Activated naive CD4-positive, alpha-beta T cell treated with anti-CD3 and anti-CD28 coated beads for 36 hours (primary cell): ENCODE measurements at regions of chr16 and their contacts with region 1.

Region 1: GRCh38 chr16:75764154-75764768 is 38.0 kb upstream of the CPHXL start:
- DNase-seq: peak; percentile 77
- H3K4me3 Mint-ChIP-seq: no peak overlapping the region
- H3K27ac Mint-ChIP-seq: no peak overlapping the region
- H3K4me1 Mint-ChIP-seq: peaks cover 12% of the 10 kb centered on the region
- H3K27me3 Mint-ChIP-seq: peaks cover 3% of the 10 kb centered on the region

Region 2: GRCh38 chr16:75198135-75198600 is 566.1 kb before region 1 on chr16:
- CTCF ChIA-PET with region 1: interaction called, 11 read pairs
- intact Hi-C with region 1: loop called (anchors 1 kb)
- DNase-seq: no peak
- H3K4me3 Mint-ChIP-seq: no peak overlapping the region
- H3K27ac Mint-ChIP-seq: no peak overlapping the region
- H3K4me1 Mint-ChIP-seq: peaks cover 9% of the 10 kb centered on the region
- H3K27me3 Mint-ChIP-seq: peaks cover 13% of the 10 kb centered on the region

Region 3: DNA sequence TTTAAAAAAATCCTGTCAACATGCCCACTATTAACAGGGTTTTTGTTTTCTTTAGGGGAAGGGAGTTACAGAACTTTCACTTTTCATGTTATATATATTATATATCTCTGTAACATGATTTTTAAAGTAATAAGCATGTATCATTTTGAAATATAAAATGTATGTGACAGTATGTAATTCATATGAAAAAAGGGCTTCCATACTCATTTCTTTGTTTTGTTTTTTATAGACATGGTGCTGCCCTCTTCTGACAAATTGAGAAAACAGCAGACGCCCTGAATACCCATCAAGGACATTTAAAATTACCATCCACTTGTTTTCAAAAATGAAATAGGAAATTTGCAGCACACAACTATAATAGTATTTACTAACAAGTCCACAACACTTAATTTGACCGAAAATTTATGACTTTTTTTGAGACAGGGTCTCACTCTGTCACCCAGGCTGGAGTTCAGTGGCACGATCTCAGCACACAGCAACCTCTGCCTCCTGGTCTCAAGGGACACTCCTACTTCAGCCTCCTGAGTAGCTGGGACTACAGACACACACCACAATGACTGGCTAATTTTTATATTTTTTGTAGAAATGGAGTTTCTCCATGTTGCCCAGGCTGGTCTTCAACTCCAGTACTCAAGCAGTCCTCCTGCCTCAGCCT is 361.3 kb before region 1 on chr16:
- CTCF ChIA-PET with region 1: no interaction called
- intact Hi-C with region 1: loop called (anchors 1 kb)
- DNase-seq: no peak
- H3K4me3 Mint-ChIP-seq: no peak overlapping the region
- H3K27ac Mint-ChIP-seq: no peak overlapping the region
- H3K4me1 Mint-ChIP-seq: peaks cover 27% of the 10 kb centered on the region
- H3K27me3 Mint-ChIP-seq: no peaks in the 10 kb centered on the region

Region 4: DNA sequence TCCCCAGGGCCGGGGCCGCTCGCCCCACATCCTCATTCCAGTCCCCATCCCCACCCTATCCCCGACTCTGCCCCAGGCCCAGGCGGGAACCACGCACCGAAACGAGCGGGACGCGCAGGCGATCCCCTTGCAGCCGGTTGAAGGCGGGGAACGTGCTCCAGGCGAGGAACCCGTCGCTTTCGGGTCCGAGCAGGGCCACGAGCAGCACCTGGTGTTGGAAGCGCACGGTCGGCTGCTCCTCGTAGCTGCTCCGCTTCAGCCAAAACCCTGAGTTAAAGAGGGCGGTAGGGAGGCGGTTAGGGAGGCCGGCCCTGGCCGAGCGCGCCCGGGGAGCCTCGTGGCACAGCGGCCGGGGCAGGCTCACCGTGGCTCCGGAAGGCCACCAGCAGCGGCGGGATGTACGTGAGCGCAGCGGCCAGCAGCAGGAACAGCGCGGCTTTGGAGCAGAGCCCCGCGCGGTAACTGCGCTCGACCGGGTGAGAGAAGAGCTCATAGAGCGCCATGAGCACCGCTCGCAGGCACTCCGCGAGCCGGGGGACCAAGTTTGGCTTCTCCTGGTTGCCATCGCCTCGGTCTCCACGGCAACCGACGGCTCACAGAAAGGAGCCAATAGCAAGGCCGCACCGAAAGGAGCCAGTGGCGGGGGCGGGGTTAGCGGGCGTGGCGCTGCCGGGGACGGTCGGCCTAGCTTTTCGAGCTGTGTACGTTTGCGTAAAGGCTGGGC is 208.4 kb before region 1 on chr16 and contains the start of gene TMEM231:
- CTCF ChIA-PET with region 1: no interaction called
- intact Hi-C with region 1: loop called (anchors 1 kb)
- DNase-seq: peak; percentile 98
- H3K4me3 Mint-ChIP-seq: peak within 1 kb of the TSS; percentile 87
- H3K27ac Mint-ChIP-seq: peak within 1 kb of the TSS; percentile 77
- H3K4me1 Mint-ChIP-seq: peaks cover 5% of the 10 kb centered on the region
- H3K27me3 Mint-ChIP-seq: peaks cover 8% of the 10 kb centered on the region
- total RNA-seq, gene TMEM231: 4.5 to 5.4 TPM

Region 5: GRCh38 chr16:75614066-75614897 is 150.0 kb before region 1 on chr16:
- CTCF ChIA-PET with region 1: no interaction called
- intact Hi-C with region 1: no loop called
- DNase-seq: no peak
- H3K4me3 Mint-ChIP-seq: no peak overlapping the region
- H3K27ac Mint-ChIP-seq: no peak overlapping the region
- H3K4me1 Mint-ChIP-seq: peaks cover 21% of the 10 kb centered on the region
- H3K27me3 Mint-ChIP-seq: no peaks in the 10 kb centered on the region

Region 6: DNA sequence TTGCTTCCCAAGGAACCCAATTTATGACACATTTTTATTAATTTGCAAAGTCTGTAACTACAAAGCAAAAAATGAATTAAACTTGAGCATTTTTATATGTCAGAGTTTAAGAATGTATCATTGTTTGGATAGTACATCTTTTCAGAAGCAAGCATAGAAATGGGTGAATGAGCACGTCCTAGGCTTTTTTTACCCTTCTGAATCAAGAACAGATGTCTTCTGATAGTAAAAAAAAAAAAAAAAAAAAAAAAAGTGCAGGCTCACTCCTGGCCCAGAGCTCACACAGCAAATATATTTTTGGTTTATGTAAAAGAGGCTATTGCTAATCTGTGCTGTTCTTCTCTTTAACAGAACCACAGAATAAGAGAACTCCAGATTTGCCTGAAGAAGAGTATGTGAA is 110.3 kb before region 1 on chr16:
- CTCF ChIA-PET with region 1: interaction called, 10 read pairs
- intact Hi-C with region 1: no loop called
- DNase-seq: no peak
- H3K4me3 Mint-ChIP-seq: peak overlapping the region; percentile 3
- H3K27ac Mint-ChIP-seq: peak overlapping the region; percentile 86
- H3K4me1 Mint-ChIP-seq: peaks cover 39% of the 10 kb centered on the region
- H3K27me3 Mint-ChIP-seq: no peaks in the 10 kb centered on the region